Stomach (tissue), 19 donors: ENCODE measurements at regions of chr9 and their contacts with region 1.

Region 1: DNA sequence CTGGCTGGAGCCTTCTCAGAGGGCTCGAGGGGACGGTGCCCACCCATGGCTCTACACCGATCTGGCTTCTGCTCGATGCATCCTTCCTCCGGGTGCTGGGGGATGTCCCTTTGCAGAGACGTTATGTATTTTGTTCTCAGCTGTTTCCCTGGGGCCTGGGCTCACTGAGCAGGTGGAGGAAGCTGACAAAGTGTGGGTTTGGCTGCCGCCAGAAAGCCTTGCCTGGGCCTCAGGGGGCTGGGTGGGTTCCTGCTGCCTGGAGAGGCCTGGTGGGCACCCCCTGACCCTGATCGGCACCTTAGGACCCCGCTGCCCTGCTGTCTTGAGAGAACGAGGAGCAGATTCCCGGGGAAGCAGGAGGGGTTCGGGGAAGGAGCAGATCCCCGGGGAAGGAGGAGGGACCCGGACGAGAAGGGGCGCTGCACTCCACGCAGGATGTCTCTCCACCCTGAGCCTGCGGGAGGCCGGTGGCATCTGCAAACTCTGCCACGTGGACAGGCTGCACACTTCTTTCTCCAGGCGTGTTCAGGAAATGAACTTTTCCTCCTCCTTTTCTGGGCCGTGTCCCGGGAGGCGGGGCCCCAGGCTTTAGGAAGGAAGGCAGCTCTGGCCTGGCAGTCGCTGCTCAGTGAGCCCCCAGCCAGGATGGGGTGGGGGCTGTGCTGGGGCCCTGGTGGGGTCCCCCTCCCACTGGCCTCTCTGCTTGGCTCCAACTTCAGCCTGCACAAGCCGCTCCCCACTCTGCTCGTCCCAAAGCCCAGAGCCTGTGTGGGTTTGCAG is 148.9 kb downstream of the RXRA start:
- DNase-seq: peak; percentile 56 to 92
- H3K4me3 ChIP-seq: no peak overlapping the region
- H3K27ac ChIP-seq: peak overlapping the region in 3 of 5 donors; percentile 55 to 74 (median 58)
- H3K4me1 ChIP-seq: peaks cover 13 to 25% (median 24%) of the 10 kb centered on the region in 4 donors
- H3K27me3 ChIP-seq: no peaks in the 10 kb centered on the region
- CTCF ChIP-seq: no peak
- EP300 ChIP-seq: no peak
- POLR2A ChIP-seq: no peak

Region 2: DNA sequence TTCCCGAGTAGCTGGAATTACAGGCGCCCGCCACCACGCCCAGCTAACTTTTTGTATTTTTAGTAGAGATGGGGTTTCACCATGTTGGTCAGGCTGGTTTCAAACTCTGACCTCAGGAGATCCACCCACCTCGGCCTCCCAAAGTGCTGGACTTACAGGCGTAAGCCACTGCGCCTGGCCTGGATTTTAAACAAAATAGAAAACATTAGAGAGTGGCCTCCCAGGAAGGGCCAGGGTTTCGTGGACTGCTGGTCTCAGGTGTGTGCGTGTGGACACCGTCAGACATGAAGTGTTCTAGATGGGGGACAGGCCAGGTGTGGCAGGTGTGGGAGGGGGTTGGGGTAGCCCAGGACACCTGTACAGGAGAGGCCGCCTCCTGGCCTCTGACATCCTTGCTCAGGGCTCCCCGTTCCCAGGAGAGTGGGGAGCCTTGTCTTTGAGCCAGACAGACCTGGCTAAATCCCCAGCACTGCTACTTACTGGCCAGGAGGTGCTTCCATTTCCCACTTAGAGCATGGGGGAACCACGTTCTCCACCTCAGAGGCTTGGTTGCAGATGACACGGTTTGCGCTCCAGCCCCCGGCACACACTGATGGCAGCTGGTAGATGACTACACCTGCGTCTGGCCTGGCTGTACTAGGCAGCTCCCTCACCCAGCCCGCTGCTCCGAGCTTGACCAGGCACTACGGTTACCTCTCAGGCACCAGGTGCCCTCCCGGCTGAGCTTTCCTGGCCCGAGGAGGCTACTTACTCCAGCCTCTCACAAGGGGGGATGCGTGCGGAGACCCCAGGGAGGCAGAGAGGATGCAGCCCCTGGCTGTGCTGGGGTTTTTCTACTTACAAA is 1304.3 kb before region 1 on chr9:
- intact Hi-C with region 1: loop called (anchors 5 kb)
- DNase-seq: no peak
- H3K4me3 ChIP-seq: no peak overlapping the region
- H3K27ac ChIP-seq: no peak overlapping the region
- H3K4me1 ChIP-seq: no peaks in the 10 kb centered on the region
- H3K27me3 ChIP-seq: peaks cover 0 to 12% (median 0%) of the 10 kb centered on the region in 3 donors
- CTCF ChIP-seq: no peak
- EP300 ChIP-seq: no peak
- POLR2A ChIP-seq: no peak

Region 3: DNA sequence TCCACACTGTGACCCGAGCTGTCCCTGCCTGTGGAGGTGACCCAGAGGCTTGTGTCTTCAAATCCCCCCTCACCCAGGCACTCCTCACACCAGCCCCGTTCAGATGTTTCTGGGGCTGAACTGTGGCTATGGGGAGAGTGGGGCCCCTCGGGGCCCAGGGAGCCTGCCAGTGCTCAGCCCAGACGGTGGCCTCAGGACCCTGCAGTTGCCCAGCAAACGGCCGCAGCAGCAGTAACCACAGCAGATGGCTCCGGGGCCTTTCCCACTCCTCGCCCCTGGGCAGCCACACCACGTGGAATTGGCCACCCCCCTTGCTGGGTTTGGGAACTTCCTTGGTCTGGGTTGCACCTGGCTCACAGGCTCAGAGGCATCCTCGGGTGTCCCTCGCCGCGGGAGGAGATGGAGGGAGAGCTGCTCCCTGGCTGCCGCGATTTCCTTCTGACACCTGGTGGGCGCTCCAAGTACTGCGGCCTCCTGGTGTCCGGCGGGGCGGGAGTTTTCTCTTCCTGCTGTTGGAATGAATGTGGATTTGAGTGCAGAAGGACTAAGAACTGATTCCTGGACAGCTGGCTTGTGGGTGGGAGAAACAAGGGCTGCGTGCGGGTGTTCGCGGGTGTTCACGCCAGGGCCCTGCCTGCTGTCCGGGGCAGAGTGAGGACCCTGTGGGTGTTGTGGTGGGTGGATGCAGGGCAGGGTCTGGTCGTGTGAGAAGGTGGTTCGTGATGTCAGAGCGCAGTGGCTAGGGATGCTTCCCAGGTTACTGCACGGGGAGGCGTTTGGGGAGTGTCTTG is 263.9 kb after region 1 on chr9:
- intact Hi-C with region 1: no loop called
- DNase-seq: peak; percentile 67 to 87
- H3K4me3 ChIP-seq: no peak overlapping the region
- H3K27ac ChIP-seq: peak overlapping the region in 2 of 5 donors; percentile 48 to 64
- H3K4me1 ChIP-seq: peaks cover 6 to 40% (median 23%) of the 10 kb centered on the region in 4 donors
- H3K27me3 ChIP-seq: peaks cover 0 to 13% (median 0%) of the 10 kb centered on the region in 3 donors
- CTCF ChIP-seq: peak in 6 of 7 experiments; percentile 30 to 92 (median 82)
- EP300 ChIP-seq: no peak
- POLR2A ChIP-seq: no peak